Mammary epithelial cell (primary cell): ENCODE measurements at regions of chr14 and their contacts with region 1.

Region 1: DNA sequence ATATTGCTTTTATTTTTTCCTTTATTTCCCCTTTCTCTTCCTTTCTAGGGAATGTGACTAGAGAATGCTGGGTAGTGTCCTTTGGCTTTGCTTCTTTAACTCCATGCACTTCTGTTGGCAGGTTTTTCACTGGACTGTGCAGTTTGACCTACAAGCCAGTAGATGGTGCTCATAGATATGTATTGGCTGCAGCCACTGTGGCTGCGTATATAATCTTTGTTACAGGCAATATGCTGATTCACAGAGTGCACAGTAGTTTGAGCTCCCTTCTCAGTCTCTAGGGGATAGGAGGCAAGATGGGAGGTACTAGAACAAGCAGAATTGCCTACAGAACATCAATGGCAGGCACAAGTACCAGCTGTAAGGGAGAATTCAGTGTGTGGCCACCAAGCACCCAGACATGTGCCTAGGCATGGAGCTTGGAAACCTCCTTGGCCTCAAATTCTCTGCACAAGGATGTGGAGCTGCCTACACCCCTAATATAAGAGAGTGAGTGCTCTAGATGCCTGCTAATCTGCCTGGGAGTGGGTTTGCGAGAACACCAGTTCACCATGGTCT is 503.6 kb downstream of the LRFN5 start:
- DNase-seq: peak; percentile 14
- H3K4me3 ChIP-seq: no peak overlapping the region
- H3K27ac ChIP-seq: no peak overlapping the region
- H3K4me1 ChIP-seq: peaks cover 9% of the 10 kb centered on the region
- H3K27me3 ChIP-seq: no peaks in the 10 kb centered on the region
- CTCF ChIP-seq: peak; percentile 84 to 86

Region 2: GRCh38 chr14:42214981-42215491 is 104.8 kb after region 1 on chr14:
- CTCF ChIA-PET with region 1: no interaction called
- dilution Hi-C with region 1: no loop called
- in situ Hi-C with region 1: no loop called
- intact Hi-C with region 1: loop called (anchors 2 kb)
- DNase-seq: peak; percentile 92
- H3K4me3 ChIP-seq: no peak overlapping the region
- H3K27ac ChIP-seq: peak overlapping the region; percentile 98
- H3K4me1 ChIP-seq: peaks cover 21% of the 10 kb centered on the region
- H3K27me3 ChIP-seq: no peaks in the 10 kb centered on the region
- CTCF ChIP-seq: no peak

Region 3: DNA sequence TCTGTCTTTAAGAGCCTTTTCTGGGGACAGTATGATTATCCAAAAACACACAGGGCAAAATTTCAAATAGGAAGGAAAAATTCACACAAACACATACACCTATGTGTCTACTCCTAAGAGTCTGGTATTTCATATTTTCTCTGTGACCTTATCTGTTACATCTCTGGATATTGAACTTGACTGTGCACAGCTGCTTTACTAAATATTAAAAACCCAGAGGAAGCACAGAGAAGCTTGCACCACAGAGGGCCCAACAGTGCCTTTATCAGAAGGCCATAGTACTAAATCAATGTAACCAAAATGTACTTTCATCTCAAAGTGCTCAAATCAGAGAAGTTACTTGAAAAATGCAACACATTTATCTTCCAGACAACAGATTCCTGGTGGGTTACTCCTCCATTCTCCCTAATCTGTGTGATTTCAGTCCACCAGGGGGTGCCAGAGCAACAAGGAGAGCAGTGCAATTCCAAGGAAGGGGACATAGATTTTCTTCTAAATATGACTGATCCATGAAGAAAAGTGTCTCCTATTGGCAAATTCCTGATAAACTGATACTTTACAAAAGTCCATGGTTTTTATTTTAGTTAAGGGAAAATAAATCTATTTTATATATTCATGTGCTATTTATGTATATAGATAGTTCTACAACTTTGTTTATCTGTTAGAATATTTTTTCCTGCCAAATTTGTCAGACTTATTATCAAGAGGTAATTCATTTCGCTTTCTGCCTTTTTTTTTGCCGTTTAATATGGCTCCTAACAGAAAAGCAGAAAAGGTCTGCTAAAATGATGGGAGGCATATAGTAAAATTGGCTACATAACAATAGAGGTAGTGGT is 114.0 kb after region 1 on chr14:
- CTCF ChIA-PET with region 1: no interaction called
- dilution Hi-C with region 1: no loop called
- in situ Hi-C with region 1: no loop called
- intact Hi-C with region 1: loop called (anchors 1 kb)
- DNase-seq: peak; percentile 35
- H3K4me3 ChIP-seq: no peak overlapping the region
- H3K27ac ChIP-seq: no peak overlapping the region
- H3K4me1 ChIP-seq: peaks cover 8% of the 10 kb centered on the region
- H3K27me3 ChIP-seq: no peaks in the 10 kb centered on the region
- CTCF ChIP-seq: peak; percentile 79 to 83

Region 4: GRCh38 chr14:42407153-42407552 is 296.9 kb after region 1 on chr14:
- CTCF ChIA-PET with region 1: no interaction called
- dilution Hi-C with region 1: no loop called
- in situ Hi-C with region 1: no loop called
- intact Hi-C with region 1: no loop called
- DNase-seq: no peak
- H3K4me3 ChIP-seq: no peak overlapping the region
- H3K27ac ChIP-seq: no peak overlapping the region
- H3K4me1 ChIP-seq: no peaks in the 10 kb centered on the region
- H3K27me3 ChIP-seq: no peaks in the 10 kb centered on the region
- CTCF ChIP-seq: no peak

Region 5: GRCh38 chr14:43005807-43006206 is 895.6 kb after region 1 on chr14:
- CTCF ChIA-PET with region 1: no interaction called
- dilution Hi-C with region 1: no loop called
- in situ Hi-C with region 1: no loop called
- intact Hi-C with region 1: loop called (anchors 5 kb)
- DNase-seq: no peak
- H3K4me3 ChIP-seq: no peak overlapping the region
- H3K27ac ChIP-seq: no peak overlapping the region
- H3K4me1 ChIP-seq: no peaks in the 10 kb centered on the region
- H3K27me3 ChIP-seq: no peaks in the 10 kb centered on the region
- CTCF ChIP-seq: no peak